Activated CD4-positive, alpha-beta T cell treated with anti-CD3 and anti-CD28 coated beads for 36 hours (primary cell): ENCODE measurements at regions of chrX and their contacts with region 1.

Region 1: DNA sequence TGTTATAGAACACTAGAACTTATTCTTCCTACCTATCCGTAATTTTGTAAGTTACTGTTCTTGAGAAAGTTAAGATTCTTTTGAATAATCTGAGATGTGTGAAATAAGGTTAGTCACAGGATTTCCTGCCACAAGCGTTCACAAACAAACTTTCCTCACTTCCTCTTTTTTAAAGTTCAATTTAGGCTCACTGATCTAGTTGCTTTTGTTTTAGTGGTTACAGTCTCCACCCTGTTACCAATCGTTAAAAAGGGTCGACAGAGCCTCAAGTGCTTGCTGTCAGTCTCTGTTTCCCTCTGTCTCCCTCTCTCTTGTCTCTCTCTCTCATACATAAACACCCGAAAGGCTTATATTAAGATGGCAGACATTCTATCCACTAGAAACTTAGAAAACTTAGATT is 35.9 kb upstream of the STK26 start:
- DNase-seq: no peak
- ATAC-seq: peak; percentile 76
- H3K4me3 Mint-ChIP-seq: peak overlapping the region; percentile 54
- H3K27ac Mint-ChIP-seq: peak overlapping the region; percentile 92
- H3K4me1 Mint-ChIP-seq: peaks cover 62% of the 10 kb centered on the region
- H3K27me3 Mint-ChIP-seq: no peaks in the 10 kb centered on the region

Region 2: DNA sequence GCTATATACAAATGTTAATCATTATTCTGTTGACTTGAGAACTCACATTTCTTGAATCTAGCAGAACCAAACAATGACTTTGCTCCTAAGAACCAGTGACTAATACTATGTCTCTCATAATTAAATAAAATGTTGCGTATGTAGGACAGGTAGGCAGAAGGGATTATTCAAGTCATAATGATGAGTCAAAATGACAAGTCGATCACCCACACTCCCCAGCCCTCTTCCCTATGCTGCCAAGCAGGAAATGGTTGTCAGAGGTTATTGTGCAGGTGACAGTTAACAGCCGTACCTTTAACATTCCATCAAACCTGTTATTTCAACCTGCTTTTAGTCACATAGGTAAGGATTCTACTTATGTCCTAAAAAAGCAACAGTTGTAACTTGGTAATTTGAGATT is 13.9 kb after region 1 on chrX:
- CTCF ChIA-PET with region 1: no interaction called
- POLR2A ChIA-PET with region 1: interaction called, 4 read pairs
- intact Hi-C with region 1: loop called in 1 of 2 experiments (anchors 2 kb)
- DNase-seq: peak; percentile 50
- ATAC-seq: peak; percentile 97
- H3K4me3 Mint-ChIP-seq: no peak overlapping the region
- H3K27ac Mint-ChIP-seq: peak overlapping the region; percentile 67
- H3K4me1 Mint-ChIP-seq: peaks cover 33% of the 10 kb centered on the region
- H3K27me3 Mint-ChIP-seq: no peaks in the 10 kb centered on the region

Region 3: DNA sequence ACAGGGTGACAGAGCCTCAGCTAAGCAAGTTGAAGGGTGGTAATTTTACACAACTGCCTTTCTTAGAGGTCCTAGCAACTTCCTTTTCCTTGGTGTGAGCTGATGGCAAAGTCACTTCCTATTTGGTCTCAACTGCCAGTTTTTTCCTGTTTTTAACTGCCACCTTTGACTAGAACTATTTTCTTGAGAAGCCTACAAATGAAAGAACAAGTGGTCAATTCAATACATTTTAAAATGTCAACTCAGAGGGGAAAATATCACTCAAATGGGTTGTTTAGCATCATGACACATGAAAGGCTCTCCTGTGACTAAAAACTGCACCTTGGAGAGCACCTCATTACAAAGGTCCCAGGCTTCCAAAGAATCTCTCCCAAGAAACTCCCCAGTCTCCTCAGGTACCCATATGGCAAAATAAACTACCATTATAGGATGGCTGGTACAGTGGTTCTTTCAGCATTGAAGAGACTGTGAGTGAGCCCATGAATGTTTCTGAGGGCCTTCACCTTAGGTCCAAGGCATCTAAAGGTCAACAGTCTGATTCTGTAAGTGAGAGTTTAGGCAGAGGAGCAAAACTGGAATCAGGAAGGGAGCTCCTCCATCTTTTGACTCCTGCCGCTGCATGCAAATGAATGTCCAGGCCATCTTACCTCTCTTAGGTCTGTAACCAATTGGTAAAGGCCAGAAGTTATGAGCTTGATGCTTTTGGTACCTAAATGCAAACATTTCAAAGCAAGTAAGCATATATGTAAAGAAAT is 30.4 kb after region 1 on chrX:
- CTCF ChIA-PET with region 1: no interaction called
- POLR2A ChIA-PET with region 1: no interaction called
- intact Hi-C with region 1: loop called (anchors 2 kb)
- DNase-seq: no peak
- ATAC-seq: peak; percentile 42
- H3K4me3 Mint-ChIP-seq: no peak overlapping the region
- H3K27ac Mint-ChIP-seq: peak overlapping the region; percentile 74
- H3K4me1 Mint-ChIP-seq: peaks cover 34% of the 10 kb centered on the region
- H3K27me3 Mint-ChIP-seq: no peaks in the 10 kb centered on the region